Natural killer cell (primary cell): ENCODE measurements at regions of chr13 and their contacts with region 1.

Region 1: GRCh38 chr13:97359181-97360057 is 74.5 kb upstream of the RAP2A start:
- DNase-seq: peak in 1 of 2 donors; percentile 82
- ATAC-seq: peak; percentile 86 to 99 (median 96)
- H3K4me3 ChIP-seq: no peak overlapping the region
- H3K4me3 Mint-ChIP-seq: no peak overlapping the region
- H3K27ac ChIP-seq: no peak overlapping the region
- H3K27ac Mint-ChIP-seq: no peak overlapping the region
- H3K4me1 ChIP-seq: no peaks in the 10 kb centered on the region
- H3K4me1 Mint-ChIP-seq: no peaks in the 10 kb centered on the region
- H3K27me3 ChIP-seq: no peaks in the 10 kb centered on the region
- H3K27me3 Mint-ChIP-seq: no peaks in the 10 kb centered on the region
- CTCF ChIP-seq: peak; percentile 95

Region 2: GRCh38 chr13:97018029-97018831 is 341.2 kb before region 1 on chr13:
- intact Hi-C with region 1: loop called (anchors 1 kb)
- DNase-seq: peak in 1 of 2 donors; percentile 70
- ATAC-seq: peak in 2 of 3 donors; percentile 57 to 77
- H3K4me3 ChIP-seq: no peak overlapping the region
- H3K4me3 Mint-ChIP-seq: no peak overlapping the region
- H3K27ac ChIP-seq: no peak overlapping the region
- H3K27ac Mint-ChIP-seq: no peak overlapping the region
- H3K4me1 ChIP-seq: no peaks in the 10 kb centered on the region
- H3K4me1 Mint-ChIP-seq: peaks cover 0 to 5% of the 10 kb centered on the region in 2 donors
- H3K27me3 ChIP-seq: peaks cover 4% of the 10 kb centered on the region
- H3K27me3 Mint-ChIP-seq: peaks cover 28 to 40% of the 10 kb centered on the region in 2 donors
- CTCF ChIP-seq: peak; percentile 71

Region 3: DNA sequence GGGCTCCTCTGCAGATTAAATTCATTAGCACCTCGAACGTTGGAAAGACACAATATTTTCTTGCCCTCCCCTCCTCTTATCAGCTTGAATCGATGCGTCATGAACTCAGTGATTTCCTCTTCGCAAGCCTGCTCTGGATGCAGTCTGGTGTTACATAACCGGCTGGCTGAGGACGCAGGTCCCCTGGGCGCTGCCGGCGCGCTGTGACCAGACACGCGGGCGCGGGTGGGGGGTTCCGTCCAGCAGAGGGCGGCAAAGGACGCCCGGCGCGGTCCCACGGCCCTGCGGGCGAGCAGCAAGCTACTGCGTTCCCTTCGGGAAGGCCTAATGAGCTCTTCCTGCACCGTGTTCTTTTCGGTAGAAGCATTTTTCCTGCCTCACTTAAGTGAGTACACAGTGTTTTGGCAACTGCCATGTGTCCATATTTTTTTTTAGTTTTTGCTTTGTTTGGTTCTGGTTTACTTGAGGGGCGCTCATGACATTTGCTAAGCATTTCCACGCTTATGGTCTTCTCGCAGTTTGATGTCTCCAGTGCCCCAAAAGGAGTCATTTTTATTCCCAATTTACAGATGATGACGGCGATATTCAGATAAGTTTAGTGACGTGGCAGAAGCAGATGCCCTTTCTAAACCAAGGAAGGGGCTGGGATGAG is 249.5 kb before region 1 on chr13:
- intact Hi-C with region 1: loop called (anchors 1 kb)
- DNase-seq: peak; percentile 78 to 87
- ATAC-seq: peak; percentile 89 to 99 (median 97)
- H3K4me3 ChIP-seq: no peak overlapping the region
- H3K4me3 Mint-ChIP-seq: no peak overlapping the region
- H3K27ac ChIP-seq: no peak overlapping the region
- H3K27ac Mint-ChIP-seq: peak overlapping the region in 1 of 2 donors; percentile 30
- H3K4me1 ChIP-seq: peaks cover 6% of the 10 kb centered on the region
- H3K4me1 Mint-ChIP-seq: peaks cover 6 to 8% of the 10 kb centered on the region in 2 donors
- H3K27me3 ChIP-seq: no peaks in the 10 kb centered on the region
- H3K27me3 Mint-ChIP-seq: peaks cover 6 to 25% of the 10 kb centered on the region in 2 donors
- CTCF ChIP-seq: peak; percentile 93

Region 4: GRCh38 chr13:97235549-97236231 is 123.7 kb before region 1 on chr13:
- intact Hi-C with region 1: loop called (anchors 5 kb)
- DNase-seq: no peak
- ATAC-seq: no peak
- H3K4me3 ChIP-seq: no peak overlapping the region
- H3K4me3 Mint-ChIP-seq: no peak overlapping the region
- H3K27ac ChIP-seq: no peak overlapping the region
- H3K27ac Mint-ChIP-seq: no peak overlapping the region
- H3K4me1 ChIP-seq: peaks cover 9% of the 10 kb centered on the region
- H3K4me1 Mint-ChIP-seq: peaks cover 72 to 76% of the 10 kb centered on the region in 2 donors
- H3K27me3 ChIP-seq: no peaks in the 10 kb centered on the region
- H3K27me3 Mint-ChIP-seq: no peaks in the 10 kb centered on the region
- CTCF ChIP-seq: no peak

Region 5: GRCh38 chr13:97448503-97449230 is 89.2 kb after region 1 on chr13:
- intact Hi-C with region 1: no loop called
- DNase-seq: no peak
- ATAC-seq: no peak
- H3K4me3 ChIP-seq: no peak overlapping the region
- H3K4me3 Mint-ChIP-seq: no peak overlapping the region
- H3K27ac ChIP-seq: no peak overlapping the region
- H3K27ac Mint-ChIP-seq: no peak overlapping the region
- H3K4me1 ChIP-seq: no peaks in the 10 kb centered on the region
- H3K4me1 Mint-ChIP-seq: peaks cover 26 to 40% of the 10 kb centered on the region in 2 donors
- H3K27me3 ChIP-seq: no peaks in the 10 kb centered on the region
- H3K27me3 Mint-ChIP-seq: no peaks in the 10 kb centered on the region
- CTCF ChIP-seq: no peak